ENCODE measurements at regions of chr3 and their contacts with region 1.

Region 1: DNA sequence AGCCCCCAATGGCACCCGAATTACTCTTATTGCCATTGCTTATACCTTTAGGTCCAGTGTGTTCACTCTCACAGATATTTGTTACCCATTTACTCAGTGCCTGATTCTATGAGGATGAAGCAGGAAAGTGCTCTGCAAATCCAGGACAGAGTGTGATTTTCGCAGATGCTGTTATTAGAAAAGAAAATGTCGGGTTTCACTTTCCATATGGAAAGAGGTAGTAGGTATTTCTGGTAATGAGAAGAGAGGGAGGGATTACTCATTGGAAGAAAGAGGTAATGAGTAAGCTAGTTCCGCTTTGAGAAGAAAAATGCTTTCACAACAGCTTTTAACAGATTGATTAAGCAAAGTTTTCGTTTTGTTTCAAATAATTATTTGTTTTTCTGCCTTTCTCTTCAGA is 336.3 kb upstream of the CFAP20DC start:
- DNase-seq: no peak
- H3K4me3 Mint-ChIP-seq: peak overlapping the region; percentile 31
- H3K27ac Mint-ChIP-seq: peak overlapping the region; percentile 98
- H3K4me1 Mint-ChIP-seq: peaks cover 85% of the 10 kb centered on the region
- H3K27me3 Mint-ChIP-seq: no peaks in the 10 kb centered on the region

Region 2: DNA sequence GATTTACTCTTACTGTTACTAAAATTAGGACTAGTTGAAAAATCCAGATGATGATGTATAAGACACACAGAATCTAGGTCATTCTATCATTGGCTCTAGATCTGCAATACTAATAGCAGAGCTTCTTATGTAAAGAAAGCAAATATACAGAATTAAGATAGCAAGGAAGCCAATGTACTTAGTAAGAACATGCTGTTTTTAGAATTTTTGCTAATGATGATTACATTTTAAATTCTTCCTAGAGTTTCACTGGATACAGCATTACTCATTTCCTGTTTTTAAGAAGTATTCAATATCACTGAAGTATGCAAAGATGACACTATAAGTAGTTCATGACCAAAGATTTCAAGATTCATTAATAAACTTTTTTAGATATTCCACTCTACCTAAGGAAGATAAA is 397.0 kb before region 1 on chr3:
- intact Hi-C with region 1: no loop called
- DNase-seq: no peak
- H3K4me3 Mint-ChIP-seq: no peak overlapping the region
- H3K27ac Mint-ChIP-seq: no peak overlapping the region
- H3K4me1 Mint-ChIP-seq: no peaks in the 10 kb centered on the region
- H3K27me3 Mint-ChIP-seq: peaks cover 21% of the 10 kb centered on the region

Region 3: GRCh38 chr3:59093521-59093920 is 292.6 kb before region 1 on chr3:
- intact Hi-C with region 1: no loop called
- DNase-seq: no peak
- H3K4me3 Mint-ChIP-seq: no peak overlapping the region
- H3K27ac Mint-ChIP-seq: no peak overlapping the region
- H3K4me1 Mint-ChIP-seq: no peaks in the 10 kb centered on the region
- H3K27me3 Mint-ChIP-seq: peaks cover 9% of the 10 kb centered on the region

Region 4: DNA sequence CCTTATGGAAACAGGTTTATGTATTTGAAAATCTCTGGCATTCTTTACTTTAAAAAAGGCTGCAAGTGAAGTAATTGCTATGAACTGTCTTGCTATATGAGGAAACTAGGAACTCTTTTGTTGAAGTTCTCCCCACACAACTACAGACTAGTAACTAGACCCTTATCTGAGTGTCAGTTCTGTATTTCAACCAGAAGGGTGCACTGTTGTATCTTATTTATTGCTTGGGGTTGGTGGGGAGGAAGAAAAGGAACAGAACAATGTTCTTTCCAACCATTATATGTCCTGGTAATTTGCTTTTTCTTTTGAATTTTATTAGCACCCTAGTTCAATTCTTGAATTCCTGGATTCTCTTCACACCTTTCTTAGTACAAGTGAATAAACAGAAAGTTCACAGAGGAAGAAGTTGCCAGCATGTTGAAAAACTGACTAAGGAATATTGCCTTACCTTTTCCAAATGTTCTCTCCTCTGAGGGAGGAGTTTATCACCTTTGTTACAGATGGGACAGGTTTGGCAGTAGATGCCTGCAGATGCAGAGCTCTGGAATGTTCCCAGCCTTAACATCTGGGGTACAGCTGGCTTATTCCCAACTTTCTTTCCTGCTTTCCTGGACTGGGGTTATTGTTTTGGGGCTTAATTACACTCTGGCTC is 173.9 kb before region 1 on chr3:
- intact Hi-C with region 1: loop called (anchors 5 kb)
- DNase-seq: peak; percentile 73
- H3K4me3 Mint-ChIP-seq: no peak overlapping the region
- H3K27ac Mint-ChIP-seq: no peak overlapping the region
- H3K4me1 Mint-ChIP-seq: peaks cover 9% of the 10 kb centered on the region
- H3K27me3 Mint-ChIP-seq: peaks cover 11% of the 10 kb centered on the region

Region 5: DNA sequence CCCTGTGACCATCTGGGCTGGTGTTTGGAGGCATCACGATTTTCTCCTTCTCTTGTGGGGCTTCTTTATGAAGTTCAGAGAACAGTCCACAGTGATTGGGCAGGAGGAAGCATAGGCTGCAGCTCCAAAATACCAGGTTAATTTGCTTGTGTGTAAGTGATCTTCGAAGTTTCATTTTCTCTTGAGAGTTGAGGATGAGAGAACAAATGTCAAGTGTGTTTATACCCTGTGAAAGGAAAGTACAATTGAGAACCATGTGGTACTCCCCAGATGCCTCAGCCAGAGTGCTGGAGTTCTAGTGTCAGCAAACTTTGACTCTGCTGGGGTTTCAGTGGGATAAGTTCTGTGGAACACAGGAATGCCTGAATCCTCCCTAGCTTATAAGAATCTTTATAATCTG is 20.8 kb after region 1 on chr3:
- intact Hi-C with region 1: loop called (anchors 2 kb)
- DNase-seq: peak; percentile 67
- H3K4me3 Mint-ChIP-seq: peak overlapping the region; percentile 44
- H3K27ac Mint-ChIP-seq: peak overlapping the region; percentile 67
- H3K4me1 Mint-ChIP-seq: peaks cover 24% of the 10 kb centered on the region
- H3K27me3 Mint-ChIP-seq: no peaks in the 10 kb centered on the region

Region 6: GRCh38 chr3:59502806-59503205 is 116.6 kb after region 1 on chr3:
- intact Hi-C with region 1: loop called (anchors 2 kb)
- DNase-seq: peak; percentile 70
- H3K4me3 Mint-ChIP-seq: peak overlapping the region; percentile 4
- H3K27ac Mint-ChIP-seq: peak overlapping the region; percentile 46
- H3K4me1 Mint-ChIP-seq: peaks cover 12% of the 10 kb centered on the region
- H3K27me3 Mint-ChIP-seq: no peaks in the 10 kb centered on the region

Region 7: GRCh38 chr3:59783468-59783988 is 397.4 kb after region 1 on chr3:
- intact Hi-C with region 1: loop called (anchors 2 kb)
- DNase-seq: peak; percentile 79
- H3K4me3 Mint-ChIP-seq: peak overlapping the region; percentile 39
- H3K27ac Mint-ChIP-seq: peak overlapping the region; percentile 76
- H3K4me1 Mint-ChIP-seq: peaks cover 31% of the 10 kb centered on the region
- H3K27me3 Mint-ChIP-seq: no peaks in the 10 kb centered on the region

Region 8: DNA sequence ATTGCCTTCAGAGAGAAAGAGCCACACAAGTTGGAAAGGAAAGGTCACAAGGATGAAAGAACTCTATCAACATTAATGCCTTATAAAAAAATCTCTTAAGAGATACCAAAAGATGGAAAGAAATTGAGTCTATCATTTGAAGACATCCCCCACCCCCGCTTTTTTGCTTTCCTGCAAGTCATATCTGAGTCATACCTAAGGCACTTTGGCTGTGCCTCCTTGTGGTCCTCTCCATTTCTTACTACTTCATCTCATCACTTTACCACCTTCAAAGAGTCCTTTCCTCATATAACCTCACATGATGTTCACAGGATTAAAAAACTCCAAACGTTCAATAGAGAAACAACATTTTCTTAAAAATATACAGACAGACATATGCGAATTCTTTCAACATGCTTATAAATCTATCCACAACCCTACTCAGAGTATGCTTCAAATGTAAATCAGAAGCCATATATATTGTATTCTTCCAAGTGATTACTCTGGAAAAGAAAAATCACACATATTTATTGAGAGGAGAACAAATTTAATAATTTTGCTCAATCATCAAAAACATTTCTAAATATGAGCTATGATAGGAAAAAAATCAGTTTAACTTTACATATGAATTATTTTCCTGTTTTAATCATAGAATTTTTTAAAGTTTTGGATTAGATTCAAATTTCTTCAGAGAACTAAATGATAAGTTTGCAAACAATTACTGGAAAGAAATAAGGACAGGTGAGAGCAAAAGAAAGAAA is 667.5 kb after region 1 on chr3:
- intact Hi-C with region 1: loop called (anchors 1 kb)
- DNase-seq: peak; percentile 72
- H3K4me3 Mint-ChIP-seq: peak overlapping the region; percentile 61
- H3K27ac Mint-ChIP-seq: peak overlapping the region; percentile 93
- H3K4me1 Mint-ChIP-seq: peaks cover 78% of the 10 kb centered on the region
- H3K27me3 Mint-ChIP-seq: no peaks in the 10 kb centered on the region

Measured in activated CD4-positive, alpha-beta T cell treated with anti-CD3 and anti-CD28 coated beads, Interleukin-2, amount 10 ng/mL, durations not matched to agents 24 days and 14 days (primary cell).